GM12878 (cell line): ENCODE measurements at regions of chr2 and their contacts with region 1.

Region 1: DNA sequence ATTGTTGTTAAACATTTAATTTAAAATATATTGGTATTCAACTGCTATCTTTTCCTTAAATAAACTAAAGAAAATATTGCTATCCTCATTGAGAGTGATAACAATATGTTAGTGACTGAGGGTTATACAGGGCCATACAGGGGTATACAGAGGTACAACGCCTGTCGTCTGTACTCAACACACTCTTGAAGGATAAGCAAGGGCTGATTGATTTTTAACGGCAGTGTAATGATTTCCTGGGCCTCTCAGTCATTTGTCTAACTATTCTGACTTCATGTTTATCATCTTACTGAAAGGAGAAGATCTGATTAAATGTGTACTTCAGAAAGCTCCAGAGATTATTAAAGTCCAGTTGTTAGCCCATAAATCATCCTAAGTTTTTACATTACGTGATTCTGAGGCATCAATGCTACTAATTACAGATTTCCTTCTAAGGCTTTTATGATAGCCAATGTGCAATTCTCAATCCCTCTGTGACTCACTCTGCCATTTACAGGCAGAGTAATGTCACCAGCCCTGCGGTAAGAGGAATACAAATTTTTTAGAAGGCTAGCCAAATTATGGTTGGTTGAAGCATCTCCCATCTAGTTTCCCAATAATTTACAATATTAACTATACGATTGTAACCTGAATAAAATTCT is 893.0 kb upstream of the CHAC2 start:
- DNase-seq: no peak
- ATAC-seq: no peak
- H3K4me3 ChIP-seq: no peak overlapping the region
- H3K27ac ChIP-seq: no peak overlapping the region
- H3K4me1 ChIP-seq: no peaks in the 10 kb centered on the region
- H3K27me3 ChIP-seq: no peaks in the 10 kb centered on the region
- CTCF ChIP-seq: no peak
- EP300 ChIP-seq: no peak
- POLR2A ChIP-seq: no peak
- RAD21 ChIP-seq: no peak

Region 2: DNA sequence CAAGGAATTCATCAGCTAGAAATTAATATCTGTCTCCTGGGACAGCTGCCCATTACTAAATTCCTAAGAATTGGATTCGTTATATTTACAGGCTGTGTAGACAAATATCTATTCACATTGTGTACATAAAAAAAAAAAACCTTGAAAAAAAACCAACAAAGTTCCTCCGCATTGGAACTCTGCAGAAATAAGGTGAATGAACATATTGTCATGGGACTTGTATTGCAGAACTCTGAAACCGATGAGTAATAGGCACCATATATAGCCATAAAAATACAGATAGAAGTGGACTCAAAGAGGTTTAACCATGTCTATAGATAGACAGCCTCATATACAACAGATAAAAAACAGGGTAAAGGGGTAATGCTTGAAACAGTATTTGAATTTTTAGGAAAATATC is 16.9 kb before region 1 on chr2:
- CTCF ChIA-PET with region 1: no interaction called
- POLR2A ChIA-PET with region 1: interaction called, 3 read pairs
- RAD21 ChIA-PET with region 1: no interaction called
- SMC1A ChIA-PET with region 1: no interaction called
- in situ Hi-C with region 1: no loop called
- intact Hi-C with region 1: loop called (anchors 1 kb)
- DNase-seq: no peak
- ATAC-seq: no peak
- H3K4me3 ChIP-seq: no peak overlapping the region
- H3K27ac ChIP-seq: no peak overlapping the region
- H3K4me1 ChIP-seq: no peaks in the 10 kb centered on the region
- H3K27me3 ChIP-seq: no peaks in the 10 kb centered on the region
- CTCF ChIP-seq: no peak
- EP300 ChIP-seq: no peak
- POLR2A ChIP-seq: no peak
- RAD21 ChIP-seq: no peak